ENCODE measurements at regions of chr12 and their contacts with region 1.

Region 1: GRCh38 chr12:30457621-30458289 is 237.9 kb downstream of the IPO8 start:
- DNase-seq: no peak
- ATAC-seq: peak; percentile 66
- H3K4me3 Mint-ChIP-seq: no peak overlapping the region
- H3K27ac Mint-ChIP-seq: no peak overlapping the region
- H3K4me1 Mint-ChIP-seq: no peaks in the 10 kb centered on the region
- H3K27me3 Mint-ChIP-seq: no peaks in the 10 kb centered on the region
- CTCF ChIP-seq: no peak

Region 2: GRCh38 chr12:30440826-30441602 is 16.7 kb before region 1 on chr12:
- CTCF ChIA-PET with region 1: interaction called, 11 read pairs
- POLR2A ChIA-PET with region 1: no interaction called
- DNase-seq: peak; percentile 52
- ATAC-seq: peak; percentile 99
- H3K4me3 Mint-ChIP-seq: no peak overlapping the region
- H3K27ac Mint-ChIP-seq: no peak overlapping the region
- H3K4me1 Mint-ChIP-seq: no peaks in the 10 kb centered on the region
- H3K27me3 Mint-ChIP-seq: no peaks in the 10 kb centered on the region
- CTCF ChIP-seq: no peak; the same call in 1 of the 2 replicates